ENCODE measurements at regions of chr1 and their contacts with region 1.

Region 1: DNA sequence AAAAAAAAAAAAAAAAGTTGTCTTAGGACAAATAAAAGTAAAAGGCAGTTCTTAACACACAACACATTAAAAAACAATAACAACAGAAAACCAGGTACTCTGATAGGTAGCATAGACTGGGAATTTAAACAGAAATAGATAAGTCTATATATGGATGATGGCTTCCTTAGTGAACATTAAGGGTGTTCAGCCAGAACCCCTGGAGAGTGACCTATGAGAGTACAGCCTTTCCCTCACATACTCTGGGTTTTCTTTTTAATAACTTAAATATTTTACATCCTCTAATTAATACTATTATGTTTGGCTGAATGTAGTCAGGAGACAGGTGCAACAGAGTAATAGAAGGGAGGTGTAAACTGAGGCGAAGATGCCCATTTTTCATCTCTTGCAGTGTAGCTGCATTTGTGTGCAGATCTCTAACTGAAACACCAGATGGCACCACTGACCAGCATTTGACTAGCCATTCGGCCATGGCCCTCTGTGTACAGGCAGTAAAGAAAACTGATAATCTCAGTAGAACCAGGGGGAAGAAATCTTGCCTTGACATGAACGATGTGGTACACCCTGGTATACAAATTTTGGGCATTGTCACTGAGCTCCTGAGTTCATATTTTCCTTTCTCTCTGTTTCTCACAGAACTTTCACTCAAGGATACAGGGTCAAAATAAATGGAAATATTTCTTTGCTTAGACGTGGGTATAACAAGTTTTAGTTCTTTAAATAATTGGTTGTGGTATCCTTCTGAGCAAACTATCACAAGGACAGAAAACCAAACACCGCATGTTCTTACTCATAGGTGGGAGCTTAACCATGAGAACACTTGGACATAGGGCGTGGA is 7.6 kb downstream of the TTF2 start:
- DNase-seq: no peak

Region 2: GRCh38 chr1:116693759-116694482 is 373.8 kb before region 1 on chr1:
- intact Hi-C with region 1: no loop called
- DNase-seq: peak; percentile 85

Region 3: DNA sequence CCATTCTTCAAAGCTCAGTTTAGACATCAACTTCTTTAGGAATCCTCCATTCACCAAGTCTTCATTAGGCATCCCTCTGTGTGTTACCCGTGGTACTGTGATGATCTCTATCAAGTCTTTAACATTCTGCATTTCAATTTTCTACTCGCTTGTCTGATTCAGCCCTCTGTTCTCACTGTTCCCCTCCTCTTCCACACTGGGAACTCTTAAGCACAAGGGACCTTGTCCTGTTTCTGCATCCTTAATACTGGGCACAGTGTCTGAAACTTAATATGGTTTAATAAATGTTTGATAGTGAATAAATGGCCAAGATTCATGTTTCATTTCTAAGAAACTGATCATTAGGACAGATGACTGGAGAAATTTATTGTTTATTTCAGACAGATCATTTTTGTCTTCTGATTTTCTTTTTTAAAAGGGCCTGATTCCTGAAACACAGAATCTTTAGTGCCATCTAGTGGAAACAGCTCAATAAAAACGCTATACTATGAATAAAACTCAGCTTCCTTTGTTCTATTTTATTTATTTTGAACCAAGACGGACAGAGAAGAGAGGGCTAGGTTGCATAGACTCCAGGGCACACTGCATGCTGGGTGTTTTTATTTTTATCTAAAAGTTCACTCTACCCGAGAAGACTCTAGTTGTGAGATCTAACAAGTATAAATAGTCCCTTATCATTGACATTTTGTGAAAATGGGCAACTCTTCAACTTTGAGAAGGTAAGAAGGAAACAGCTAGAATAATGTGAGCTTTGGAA is 60.7 kb after region 1 on chr1:
- intact Hi-C with region 1: loop called in 1 of 2 experiments (anchors 5 kb)
- DNase-seq: no peak

Region 4: GRCh38 chr1:117284399-117285215 is 216.9 kb after region 1 on chr1:
- intact Hi-C with region 1: loop called (anchors 1 to 10 kb)
- DNase-seq: no peak